Sciatic nerve (tissue), 2 donors: ENCODE measurements at regions of chr3 and their contacts with region 1.

Region 1: DNA sequence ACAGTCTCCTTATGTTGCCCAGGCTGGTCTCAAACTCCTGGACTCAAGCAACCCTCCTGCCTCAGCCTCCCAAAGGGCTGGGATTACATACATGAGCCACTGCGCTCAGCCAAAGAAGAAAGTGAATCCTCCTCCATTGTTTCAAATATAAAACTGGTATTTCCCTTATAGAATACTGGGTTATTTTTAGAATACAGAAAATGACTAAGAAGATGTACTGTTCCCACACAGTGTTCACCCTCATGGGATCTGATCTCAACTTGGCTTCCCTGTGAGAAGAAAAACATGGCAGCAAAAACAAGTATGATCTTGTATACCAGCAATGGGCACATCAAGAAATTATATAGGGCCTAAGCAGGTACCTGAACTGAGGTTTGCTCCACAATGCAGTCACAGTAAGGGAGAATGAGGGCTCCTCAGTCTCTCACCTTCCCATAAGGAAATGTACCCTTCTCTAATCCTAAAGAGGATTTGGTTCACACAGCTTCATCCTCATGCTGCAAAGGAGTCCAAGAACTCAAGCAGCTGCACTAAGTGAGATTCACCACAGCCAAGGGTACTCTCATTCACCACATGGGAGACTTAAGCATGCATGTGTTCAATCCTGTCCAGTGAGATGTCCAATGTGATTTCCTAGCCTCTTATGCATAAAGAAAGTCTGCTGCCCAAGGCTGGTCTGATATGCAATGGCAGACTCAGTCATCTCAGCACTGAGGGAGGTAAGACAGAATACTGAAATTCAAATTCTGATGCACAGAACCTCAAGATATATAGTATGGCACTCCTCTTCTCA is 25.8 kb downstream of the USP4 start:
- DNase-seq: no peak
- ATAC-seq: no peak

Region 2: GRCh38 chr3:47692158-47692557 is 1621.9 kb before region 1 on chr3:
- intact Hi-C with region 1: loop called (anchors 5 kb)
- DNase-seq: no peak
- ATAC-seq: no peak

Region 3: DNA sequence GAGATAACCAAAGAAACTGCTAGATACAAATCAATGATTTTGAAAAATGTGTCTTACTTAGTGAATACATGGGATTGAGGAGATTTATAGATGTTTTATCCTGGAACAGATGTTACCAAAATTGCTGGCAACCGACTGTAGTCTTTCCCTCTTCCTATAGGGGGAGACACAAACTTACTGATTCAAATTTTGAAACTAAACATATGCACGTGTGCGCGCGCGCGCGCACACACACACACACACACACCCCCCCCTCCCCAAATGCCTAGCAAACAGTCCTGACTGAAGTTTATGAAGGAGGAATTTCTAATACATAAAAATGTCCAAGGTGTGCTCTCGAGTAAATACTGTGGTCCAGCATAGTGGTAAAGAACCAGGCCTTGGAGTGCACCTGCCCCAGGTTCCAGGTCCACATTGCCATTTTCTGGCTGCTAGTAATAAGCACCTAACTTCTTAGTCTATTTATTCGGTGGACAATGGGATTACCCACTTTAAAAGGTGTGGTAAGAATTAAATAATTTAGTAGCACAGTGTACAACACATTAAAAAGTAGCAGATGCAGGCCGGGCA is 18.5 kb before region 1 on chr3:
- intact Hi-C with region 1: loop called (anchors 1 kb)
- DNase-seq: no peak
- ATAC-seq: no peak

Region 4: GRCh38 chr3:49500732-49501609 is 186.9 kb after region 1 on chr3:
- intact Hi-C with region 1: no loop called
- DNase-seq: no peak
- ATAC-seq: peak; percentile 91